Psoas muscle (tissue), 8 donors: ENCODE measurements at regions of chr3 and their contacts with region 1.

Region 1: DNA sequence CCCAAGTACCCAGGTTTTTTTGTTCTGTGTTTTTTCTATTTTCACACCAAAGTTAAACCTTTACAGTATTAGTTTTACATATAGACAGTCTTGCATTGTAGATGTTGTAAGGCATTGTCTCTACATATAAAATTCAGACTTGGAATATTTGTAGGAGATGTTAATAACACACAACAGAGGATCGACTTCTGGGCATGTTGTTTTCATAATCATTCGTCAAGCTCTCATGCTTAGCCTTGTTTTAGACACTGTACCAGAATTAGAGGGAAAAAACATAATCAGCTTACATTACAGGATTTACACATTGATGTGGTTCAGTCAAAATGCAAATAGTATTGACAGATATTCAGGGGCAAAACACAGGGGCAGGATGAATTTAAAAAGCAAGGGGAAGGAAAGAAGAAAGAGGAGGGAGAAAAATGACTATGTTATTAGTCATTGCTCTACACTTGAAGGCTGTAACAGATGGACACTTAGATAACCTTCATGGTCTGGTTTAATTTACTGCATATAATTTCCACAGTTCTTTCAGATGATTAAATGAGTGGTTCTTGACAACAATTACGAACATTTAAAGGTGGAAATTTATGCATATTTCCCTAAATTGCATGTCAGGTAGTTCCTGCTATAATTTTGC is 7.5 kb downstream of the CMSS1 start:
- DNase-seq: no peak
- ATAC-seq: peak; percentile 37 to 70 (median 62)
- H3K4me3 ChIP-seq: no peak overlapping the region
- H3K27ac ChIP-seq: peak overlapping the region; percentile 66
- H3K4me1 ChIP-seq: peaks cover 36% of the 10 kb centered on the region
- H3K27me3 ChIP-seq: no peaks in the 10 kb centered on the region
- CTCF ChIP-seq: no peak

Region 2: DNA sequence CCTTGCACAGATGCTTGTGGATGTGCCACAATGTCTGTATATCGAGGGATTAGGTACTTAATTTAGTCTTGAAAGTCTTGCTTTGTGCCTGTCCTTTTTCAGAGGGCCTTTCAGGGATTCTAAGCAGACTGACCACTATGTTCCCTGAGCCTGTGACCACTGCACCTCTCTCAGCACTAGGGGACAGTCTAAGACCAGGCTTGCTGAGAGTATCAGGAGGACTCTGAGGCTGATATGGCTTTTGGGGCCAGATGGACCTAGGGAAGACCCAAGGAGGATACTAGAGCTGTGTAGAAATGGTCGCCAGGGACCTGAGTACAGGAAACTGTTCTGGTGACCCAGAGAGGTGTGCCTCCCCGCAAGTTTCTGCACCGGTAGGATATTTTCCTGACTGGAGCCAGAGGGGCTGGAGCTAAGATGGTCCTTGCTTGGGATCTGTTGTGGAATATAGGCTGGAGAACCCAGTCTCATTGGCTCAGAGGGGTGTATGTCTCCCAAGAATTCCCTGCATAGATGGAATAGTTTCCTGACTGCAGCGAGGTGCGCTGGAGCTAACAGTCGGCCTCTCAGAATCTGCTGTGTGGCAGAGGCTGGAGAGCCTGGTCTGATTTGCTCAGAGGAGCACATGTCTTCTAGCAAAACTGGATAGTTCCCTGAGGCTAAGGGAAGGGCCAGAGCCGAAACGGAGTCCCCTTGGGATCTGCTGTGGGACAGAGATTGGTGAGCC is 710.4 kb before region 1 on chr3:
- intact Hi-C with region 1: no loop called
- DNase-seq: no peak
- ATAC-seq: no peak
- H3K4me3 ChIP-seq: no peak overlapping the region
- H3K27ac ChIP-seq: no peak overlapping the region
- H3K4me1 ChIP-seq: no peaks in the 10 kb centered on the region
- H3K27me3 ChIP-seq: peaks cover 0 to 3% (median 0%) of the 10 kb centered on the region in 3 donors
- CTCF ChIP-seq: no peak

Region 3: GRCh38 chr3:100590114-100590839 is 765.2 kb after region 1 on chr3:
- intact Hi-C with region 1: loop called in 1 of 2 experiments (anchors 10 kb)
- DNase-seq: no peak
- ATAC-seq: peak; percentile 81 to 93 (median 83)
- H3K4me3 ChIP-seq: peak overlapping the region; percentile 32
- H3K27ac ChIP-seq: no peak overlapping the region
- H3K4me1 ChIP-seq: no peaks in the 10 kb centered on the region
- H3K27me3 ChIP-seq: no peaks in the 10 kb centered on the region
- CTCF ChIP-seq: peak; percentile 91